ENCODE measurements at regions of chr10 and their contacts with region 1.

Region 1: DNA sequence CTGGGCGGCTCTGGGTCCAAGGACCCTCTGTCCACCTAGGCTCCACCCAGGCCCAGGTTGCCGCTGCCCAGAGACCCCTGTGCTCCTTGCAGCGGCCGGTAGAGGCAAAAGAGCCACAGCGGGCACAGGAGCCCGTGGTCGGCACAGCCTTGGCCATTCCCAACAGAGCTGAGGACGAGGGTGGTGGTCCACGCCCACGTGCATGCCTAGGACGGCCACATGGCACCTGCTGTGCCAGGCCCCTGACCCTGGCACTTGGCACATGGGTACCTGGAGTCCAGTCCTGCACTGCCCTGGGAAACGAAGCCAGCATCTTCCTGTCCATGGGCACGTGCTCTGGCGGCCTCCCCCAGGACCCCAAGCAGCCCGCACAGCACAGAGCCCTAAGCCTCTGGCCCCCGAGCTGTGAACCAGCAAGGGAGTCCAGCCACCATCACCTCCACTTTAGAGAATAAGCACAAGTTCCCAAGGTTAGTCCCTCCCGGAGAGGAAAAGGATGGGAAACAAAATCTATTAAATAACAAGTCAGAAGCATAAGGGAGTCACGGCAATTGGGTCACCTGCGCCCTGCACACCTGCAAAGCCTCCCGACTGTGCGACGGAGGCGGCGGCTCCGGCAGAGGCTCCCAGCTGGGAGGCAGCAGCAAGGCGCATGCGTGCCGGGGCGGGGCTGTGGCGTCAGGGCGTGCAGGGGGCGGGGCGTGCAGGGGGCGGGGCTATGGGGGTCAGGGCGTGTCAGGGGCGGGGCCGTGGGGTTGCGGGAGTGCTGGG is 59.1 kb downstream of the STK32C start:
- DNase-seq: peak; percentile 53
- H3K4me3 ChIP-seq: peak overlapping the region in 1 of 4 donors; percentile 25
- H3K27ac ChIP-seq: no peak overlapping the region
- H3K4me1 ChIP-seq: peaks cover 0 to 4% (median 2%) of the 10 kb centered on the region in 4 donors
- H3K27me3 ChIP-seq: no peaks in the 10 kb centered on the region
- CTCF ChIP-seq: no peak
- EP300 ChIP-seq: no peak
- POLR2A ChIP-seq: no peak

Region 2: DNA sequence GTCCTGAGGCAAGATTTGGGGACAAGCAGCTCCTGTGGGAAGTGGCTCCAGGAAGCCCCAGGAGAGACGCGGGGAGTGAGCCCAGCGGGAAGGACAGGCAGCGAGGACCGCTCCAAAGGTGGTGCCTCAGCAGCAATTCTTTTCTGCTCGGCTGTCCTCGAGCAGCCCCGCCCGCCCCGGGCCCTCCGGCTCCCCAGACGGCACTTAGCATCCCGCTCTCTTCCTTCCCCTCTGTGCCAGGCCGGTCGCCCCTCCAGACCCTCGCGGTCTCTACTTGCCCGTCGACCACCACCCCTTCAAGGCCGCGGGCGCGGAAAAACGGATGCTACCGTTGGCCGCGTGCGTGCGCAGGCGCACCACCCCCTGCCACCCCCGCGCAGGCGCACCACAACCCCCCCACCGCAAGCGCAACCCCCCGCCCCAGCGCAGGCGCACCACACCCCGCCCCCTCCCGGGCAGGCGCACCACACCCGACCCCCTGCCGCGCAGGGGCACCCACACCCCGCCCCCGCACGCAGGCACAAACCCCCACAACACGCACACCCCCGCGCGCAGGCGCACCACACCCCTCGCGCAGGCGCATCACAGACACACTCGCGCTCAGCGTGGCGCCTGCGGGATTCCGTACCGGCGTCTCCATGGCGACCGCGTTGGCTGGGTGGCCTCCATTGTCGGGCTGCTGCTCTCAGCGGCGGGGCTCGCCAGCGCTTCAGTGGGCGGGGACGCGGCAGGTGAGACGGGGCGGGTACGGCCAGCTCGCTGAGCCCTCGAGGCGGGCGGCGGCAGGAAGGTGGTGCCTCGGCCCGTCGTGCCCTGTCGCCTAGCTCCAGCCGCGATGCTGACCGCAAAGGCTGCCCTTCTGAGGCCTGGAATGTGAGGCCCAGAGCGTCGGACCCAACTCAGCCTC is 83.1 kb after region 1 on chr10 and contains the start of gene LRRC27:
- in situ Hi-C with region 1: loop called in 1 of 4 experiments (anchors 25 kb)
- intact Hi-C with region 1: no loop called
- DNase-seq: peak; percentile 99
- H3K4me3 ChIP-seq: peak within 1 kb of the TSS; percentile 43 to 77 (median 61)
- H3K27ac ChIP-seq: peak within 1 kb of the TSS; percentile 88 to 89 (median 88)
- H3K4me1 ChIP-seq: peaks cover 0 to 34% (median 14%) of the 10 kb centered on the region in 4 donors
- H3K27me3 ChIP-seq: no peaks in the 10 kb centered on the region
- CTCF ChIP-seq: no peak
- EP300 ChIP-seq: no peak
- POLR2A ChIP-seq: peak; percentile 36
- total RNA-seq, gene LRRC27: 5.9 to 69.5 (median 8.3) TPM in 3 of 4 donors, not detected in the other

Measured in transverse colon (tissue), 4 donors.